ENCODE measurements at regions of chr18 and their contacts with region 1.

Region 1: DNA sequence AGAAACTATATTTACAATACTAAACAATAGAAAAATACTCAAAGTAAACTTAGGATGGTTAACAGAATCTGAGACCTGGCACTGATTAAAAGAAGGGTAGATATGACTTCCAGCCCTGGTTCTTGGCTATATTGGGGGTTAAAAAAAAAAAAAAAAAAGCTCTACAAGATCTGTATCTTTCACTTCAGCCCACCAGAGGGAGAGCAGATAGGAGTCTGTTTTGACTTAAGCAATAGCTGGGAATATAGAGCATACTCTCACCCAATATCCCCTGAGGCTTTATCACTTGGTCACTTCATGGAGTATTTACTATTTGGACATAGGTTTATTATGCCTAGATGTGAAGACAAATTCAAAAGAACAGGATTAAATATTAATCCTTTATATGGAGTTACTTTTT is 598.9 kb upstream of the LINC00305 start:
- DNase-seq: no peak
- ATAC-seq: no peak
- H3K4me3 ChIP-seq: no peak overlapping the region
- H3K4me3 Mint-ChIP-seq: no peak overlapping the region
- H3K27ac ChIP-seq: no peak overlapping the region
- H3K27ac Mint-ChIP-seq: no peak overlapping the region
- H3K4me1 ChIP-seq: no peaks in the 10 kb centered on the region
- H3K4me1 Mint-ChIP-seq: no peaks in the 10 kb centered on the region
- H3K27me3 ChIP-seq: no peaks in the 10 kb centered on the region
- H3K27me3 Mint-ChIP-seq: no peaks in the 10 kb centered on the region

Region 2: GRCh38 chr18:64693766-64694165 is 54.0 kb before region 1 on chr18:
- CTCF ChIA-PET with region 1: no interaction called
- POLR2A ChIA-PET with region 1: no interaction called
- intact Hi-C with region 1: loop called in 1 of 2 experiments (anchors 2 kb)
- DNase-seq: no peak
- ATAC-seq: no peak
- H3K4me3 ChIP-seq: no peak overlapping the region
- H3K4me3 Mint-ChIP-seq: no peak overlapping the region
- H3K27ac ChIP-seq: no peak overlapping the region
- H3K27ac Mint-ChIP-seq: no peak overlapping the region
- H3K4me1 ChIP-seq: no peaks in the 10 kb centered on the region
- H3K4me1 Mint-ChIP-seq: no peaks in the 10 kb centered on the region
- H3K27me3 ChIP-seq: no peaks in the 10 kb centered on the region
- H3K27me3 Mint-ChIP-seq: no peaks in the 10 kb centered on the region

Region 3: GRCh38 chr18:64734063-64734462 is 13.7 kb before region 1 on chr18:
- CTCF ChIA-PET with region 1: no interaction called
- POLR2A ChIA-PET with region 1: no interaction called
- intact Hi-C with region 1: no loop called
- DNase-seq: no peak
- ATAC-seq: no peak
- H3K4me3 ChIP-seq: no peak overlapping the region
- H3K4me3 Mint-ChIP-seq: no peak overlapping the region
- H3K27ac ChIP-seq: no peak overlapping the region
- H3K27ac Mint-ChIP-seq: no peak overlapping the region
- H3K4me1 ChIP-seq: no peaks in the 10 kb centered on the region
- H3K4me1 Mint-ChIP-seq: no peaks in the 10 kb centered on the region
- H3K27me3 ChIP-seq: no peaks in the 10 kb centered on the region
- H3K27me3 Mint-ChIP-seq: no peaks in the 10 kb centered on the region

Region 4: DNA sequence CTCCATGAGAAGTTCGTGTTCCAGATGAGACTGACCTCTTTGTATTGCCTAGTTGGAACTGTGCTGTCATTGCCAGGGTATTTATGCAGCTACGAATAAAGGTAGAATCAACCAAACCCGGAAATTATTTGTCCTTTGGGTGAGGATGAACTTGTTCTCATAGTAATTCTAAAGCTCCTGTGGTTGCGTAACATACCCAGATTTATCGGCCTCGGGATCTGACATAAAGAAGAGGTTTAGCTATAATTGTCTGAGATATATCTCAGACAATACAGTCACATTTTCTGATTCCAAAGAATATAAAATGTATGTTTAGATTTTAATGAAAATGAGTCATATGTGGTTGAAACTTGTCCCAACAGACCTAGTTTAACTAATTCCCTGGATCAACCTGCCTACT is 29.8 kb after region 1 on chr18:
- CTCF ChIA-PET with region 1: no interaction called
- POLR2A ChIA-PET with region 1: no interaction called
- intact Hi-C with region 1: loop called in 1 of 2 experiments (anchors 2 kb)
- DNase-seq: no peak
- ATAC-seq: no peak
- H3K4me3 ChIP-seq: no peak overlapping the region
- H3K4me3 Mint-ChIP-seq: no peak overlapping the region
- H3K27ac ChIP-seq: no peak overlapping the region
- H3K27ac Mint-ChIP-seq: no peak overlapping the region
- H3K4me1 ChIP-seq: no peaks in the 10 kb centered on the region
- H3K4me1 Mint-ChIP-seq: no peaks in the 10 kb centered on the region
- H3K27me3 ChIP-seq: no peaks in the 10 kb centered on the region
- H3K27me3 Mint-ChIP-seq: no peaks in the 10 kb centered on the region